SK-N-SH (cell line): ENCODE measurements at regions of chr16 and their contacts with region 1.

Region 1: GRCh38 chr16:81403616-81404373 is 40.8 kb upstream of the CMIP start:
- DNase-seq: peak; percentile 91
- H3K4me3 ChIP-seq: peak overlapping the region; percentile 24 to 38; a peak in 3 of 4 replicates
- H3K27ac ChIP-seq: no peak overlapping the region
- H3K4me1 ChIP-seq: peaks cover 0 to 2% of the 10 kb centered on the region in 2 experiments; a peak in 1 of 4 replicates
- H3K27me3 ChIP-seq: no peaks in the 10 kb centered on the region
- CTCF ChIP-seq: peak; percentile 88
- EP300 ChIP-seq: no peak
- RAD21 ChIP-seq: peak; percentile 97

Region 2: GRCh38 chr16:81337097-81337496 is 66.7 kb before region 1 on chr16:
- CTCF ChIA-PET with region 1: no interaction called
- POLR2A ChIA-PET with region 1: no interaction called
- DNase-seq: no peak
- H3K4me3 ChIP-seq: no peak overlapping the region
- H3K27ac ChIP-seq: no peak overlapping the region
- H3K4me1 ChIP-seq: no peaks in the 10 kb centered on the region
- H3K27me3 ChIP-seq: no peaks in the 10 kb centered on the region
- CTCF ChIP-seq: no peak
- EP300 ChIP-seq: no peak
- RAD21 ChIP-seq: no peak

Region 3: DNA sequence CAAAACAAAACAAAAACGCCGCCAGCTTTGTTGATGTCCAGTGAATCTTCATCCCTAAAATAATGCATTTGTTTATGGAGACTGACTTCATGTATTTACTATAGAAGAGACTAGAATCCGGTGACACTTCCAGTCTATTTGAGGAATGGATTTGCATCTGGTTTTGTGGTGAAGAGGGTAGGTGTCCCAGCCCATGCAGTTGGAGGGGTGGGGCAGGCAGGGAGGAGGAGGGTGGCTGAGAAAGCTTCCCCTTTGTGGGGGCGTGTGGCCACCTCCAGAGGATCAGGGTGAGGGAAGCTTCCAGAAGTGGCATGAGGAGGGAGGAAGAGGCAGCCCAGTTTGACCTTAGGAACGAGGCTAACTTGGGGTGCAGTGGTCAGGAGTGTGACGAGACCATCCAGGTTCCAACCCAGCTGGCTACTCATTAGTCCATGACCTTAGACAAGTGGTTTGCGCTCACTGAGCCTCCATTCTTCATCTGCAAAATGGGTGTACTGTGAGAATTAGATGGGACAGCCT is 110.3 kb after region 1 on chr16:
- CTCF ChIA-PET with region 1: interaction called, 10 read pairs
- POLR2A ChIA-PET with region 1: no interaction called
- DNase-seq: no peak
- H3K4me3 ChIP-seq: no peak overlapping the region
- H3K27ac ChIP-seq: peak overlapping the region in 1 of 2 experiments; percentile 98; a peak in 1 of 4 replicates
- H3K4me1 ChIP-seq: peaks cover 0 to 29% of the 10 kb centered on the region in 2 experiments; a peak in 1 of 4 replicates
- H3K27me3 ChIP-seq: no peaks in the 10 kb centered on the region
- CTCF ChIP-seq: no peak
- EP300 ChIP-seq: no peak
- RAD21 ChIP-seq: no peak

Region 4: DNA sequence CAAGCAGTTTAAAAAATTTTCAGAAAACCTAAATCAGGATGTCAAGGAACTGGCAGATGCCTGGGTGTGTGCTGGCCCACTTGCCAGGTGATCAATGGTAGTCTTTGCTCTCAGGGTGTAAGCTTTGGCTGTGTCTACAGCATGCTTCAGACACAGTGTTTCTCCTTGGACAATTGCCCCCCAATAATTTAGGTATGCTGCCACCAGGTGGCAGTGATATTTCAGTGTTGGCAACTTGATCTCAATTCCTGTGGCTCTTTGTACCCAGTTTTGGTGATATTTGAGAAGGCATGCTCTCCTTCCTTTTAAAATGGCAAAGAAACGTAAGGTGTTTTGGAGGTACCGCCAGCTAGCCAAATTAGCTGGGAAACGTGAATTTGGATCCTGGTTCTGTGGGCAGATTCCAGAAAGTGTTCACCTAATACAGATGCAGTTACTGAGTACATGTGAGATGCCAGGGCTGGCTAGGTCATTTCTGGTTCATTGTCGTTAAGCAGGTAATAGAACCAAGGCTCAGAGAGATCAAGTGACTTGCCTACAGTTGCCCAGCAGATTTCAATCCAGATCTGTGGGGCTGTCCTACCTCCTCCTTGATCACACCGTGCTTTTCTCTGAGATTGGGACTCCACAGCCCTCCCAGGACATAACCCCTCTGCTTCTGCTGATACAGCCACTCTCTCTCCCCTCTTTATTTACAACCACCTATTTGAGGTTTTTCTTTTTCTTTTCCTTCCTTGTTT is 219.7 kb after region 1 on chr16:
- CTCF ChIA-PET with region 1: interaction called, 14 read pairs
- POLR2A ChIA-PET with region 1: no interaction called
- DNase-seq: peak; percentile 59
- H3K4me3 ChIP-seq: no peak overlapping the region
- H3K27ac ChIP-seq: no peak overlapping the region
- H3K4me1 ChIP-seq: peaks cover 0 to 11% of the 10 kb centered on the region in 2 experiments; a peak in 1 of 4 replicates
- H3K27me3 ChIP-seq: no peaks in the 10 kb centered on the region
- CTCF ChIP-seq: peak; percentile 74
- EP300 ChIP-seq: no peak
- RAD21 ChIP-seq: peak; percentile 78

Region 5: DNA sequence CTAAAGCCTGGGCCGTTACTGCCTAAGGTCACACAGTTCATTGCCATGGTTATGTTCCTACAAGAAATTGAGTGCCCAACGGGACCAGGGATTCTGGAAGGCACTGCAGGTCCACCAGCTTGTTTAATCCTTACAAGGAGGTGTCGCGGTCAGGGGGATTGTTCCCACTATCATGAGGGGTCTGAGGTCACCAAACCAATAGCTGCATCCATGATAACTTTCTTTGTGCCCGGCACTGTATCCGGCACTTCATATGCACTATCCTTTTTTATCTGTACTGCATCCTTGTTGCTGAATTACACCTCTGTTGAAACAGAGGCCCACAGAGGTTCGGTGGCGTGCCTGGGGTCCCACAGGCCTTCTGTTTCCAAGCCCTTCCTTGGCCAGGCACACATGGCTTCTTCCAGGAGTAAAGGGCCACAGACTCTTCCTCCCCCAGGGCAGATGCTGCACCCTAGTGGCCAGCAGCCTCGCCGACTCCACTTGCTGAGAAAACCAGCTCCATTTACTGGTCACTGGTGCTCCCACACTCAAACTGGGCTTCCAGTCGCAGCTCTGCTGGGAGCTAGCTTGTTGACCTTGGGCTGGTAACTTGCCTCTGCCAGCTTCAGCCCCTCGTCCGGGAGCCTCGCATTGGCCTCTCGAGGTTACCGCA is 293.3 kb after region 1 on chr16:
- CTCF ChIA-PET with region 1: interaction called, 17 read pairs
- POLR2A ChIA-PET with region 1: no interaction called
- DNase-seq: peak; percentile 61
- H3K4me3 ChIP-seq: no peak overlapping the region
- H3K27ac ChIP-seq: no peak overlapping the region
- H3K4me1 ChIP-seq: peaks cover 0 to 8% of the 10 kb centered on the region in 2 experiments; a peak in 2 of 4 replicates
- H3K27me3 ChIP-seq: no peaks in the 10 kb centered on the region
- CTCF ChIP-seq: peak; percentile 60
- EP300 ChIP-seq: no peak
- RAD21 ChIP-seq: peak; percentile 67

Region 6: GRCh38 chr16:81730090-81731051 is 326.6 kb after region 1 on chr16:
- CTCF ChIA-PET with region 1: interaction called, 35 read pairs
- POLR2A ChIA-PET with region 1: no interaction called
- DNase-seq: peak; percentile 97
- H3K4me3 ChIP-seq: peak overlapping the region; percentile 30 to 43
- H3K27ac ChIP-seq: peak overlapping the region in 1 of 2 experiments; percentile 20; a peak in 1 of 4 replicates
- H3K4me1 ChIP-seq: peaks cover 0 to 10% of the 10 kb centered on the region in 2 experiments; a peak in 2 of 4 replicates
- H3K27me3 ChIP-seq: no peaks in the 10 kb centered on the region; the same call in 1 of the 2 replicates
- CTCF ChIP-seq: peak; percentile 58
- EP300 ChIP-seq: no peak
- RAD21 ChIP-seq: no peak; the same call in 1 of the 2 replicates